ENCODE measurements at regions of chr1 and their contacts with region 1.

Region 1: DNA sequence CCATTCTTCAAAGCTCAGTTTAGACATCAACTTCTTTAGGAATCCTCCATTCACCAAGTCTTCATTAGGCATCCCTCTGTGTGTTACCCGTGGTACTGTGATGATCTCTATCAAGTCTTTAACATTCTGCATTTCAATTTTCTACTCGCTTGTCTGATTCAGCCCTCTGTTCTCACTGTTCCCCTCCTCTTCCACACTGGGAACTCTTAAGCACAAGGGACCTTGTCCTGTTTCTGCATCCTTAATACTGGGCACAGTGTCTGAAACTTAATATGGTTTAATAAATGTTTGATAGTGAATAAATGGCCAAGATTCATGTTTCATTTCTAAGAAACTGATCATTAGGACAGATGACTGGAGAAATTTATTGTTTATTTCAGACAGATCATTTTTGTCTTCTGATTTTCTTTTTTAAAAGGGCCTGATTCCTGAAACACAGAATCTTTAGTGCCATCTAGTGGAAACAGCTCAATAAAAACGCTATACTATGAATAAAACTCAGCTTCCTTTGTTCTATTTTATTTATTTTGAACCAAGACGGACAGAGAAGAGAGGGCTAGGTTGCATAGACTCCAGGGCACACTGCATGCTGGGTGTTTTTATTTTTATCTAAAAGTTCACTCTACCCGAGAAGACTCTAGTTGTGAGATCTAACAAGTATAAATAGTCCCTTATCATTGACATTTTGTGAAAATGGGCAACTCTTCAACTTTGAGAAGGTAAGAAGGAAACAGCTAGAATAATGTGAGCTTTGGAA is 7.0 kb upstream of the TRIM45 start:
- DNase-seq: no peak
- H3K4me3 ChIP-seq: no peak overlapping the region; the same call in 1 of the 2 replicates
- H3K27ac ChIP-seq: no peak overlapping the region
- H3K27me3 ChIP-seq: peaks cover 10% of the 10 kb centered on the region
- CTCF ChIP-seq: peak; percentile 57

Region 2: DNA sequence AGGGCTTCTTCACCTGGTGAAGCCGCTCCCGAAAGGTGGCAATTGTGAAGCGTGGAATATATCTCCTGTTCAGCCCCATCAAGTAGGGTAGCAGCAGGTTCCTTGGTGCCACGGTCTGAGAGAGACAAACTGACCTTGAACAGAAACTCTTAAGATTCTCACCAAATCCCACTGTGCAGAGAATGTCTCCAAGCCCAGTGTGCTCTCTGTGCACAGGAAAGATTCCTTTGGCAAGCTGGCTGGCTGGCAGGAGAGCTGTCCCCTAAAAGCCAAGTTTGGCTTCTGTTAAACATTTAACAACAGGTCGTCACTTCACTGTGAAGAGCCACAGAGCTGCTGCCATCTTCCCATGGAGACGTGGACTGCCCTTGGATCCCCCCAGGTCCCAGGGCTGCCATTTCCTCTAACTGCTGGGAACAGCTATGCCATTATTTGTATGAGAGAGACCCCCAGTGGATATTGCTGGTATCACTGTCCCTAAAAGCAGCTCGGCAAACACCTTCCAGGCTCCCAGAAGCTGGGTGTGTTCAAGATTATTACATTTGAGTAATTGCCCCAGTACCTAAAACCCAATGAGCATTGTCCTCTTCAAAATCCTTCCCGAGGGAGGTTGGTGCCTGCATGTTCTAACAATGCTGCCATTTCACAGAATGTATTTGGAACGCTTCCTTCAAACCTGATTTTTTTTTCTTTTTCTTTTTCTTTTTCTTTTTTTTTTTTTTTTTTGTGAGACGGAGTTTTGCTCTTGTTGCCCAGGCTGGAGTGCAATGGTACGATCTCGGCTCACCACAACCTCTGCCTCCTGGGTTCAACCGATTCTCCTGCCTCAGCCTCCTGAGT is 629.5 kb before region 1 on chr1:
- CTCF ChIA-PET with region 1: no interaction called
- POLR2A ChIA-PET with region 1: no interaction called
- DNase-seq: no peak
- H3K4me3 ChIP-seq: no peak overlapping the region
- H3K27ac ChIP-seq: no peak overlapping the region
- H3K27me3 ChIP-seq: no peaks in the 10 kb centered on the region
- CTCF ChIP-seq: peak; percentile 91

Region 3: DNA sequence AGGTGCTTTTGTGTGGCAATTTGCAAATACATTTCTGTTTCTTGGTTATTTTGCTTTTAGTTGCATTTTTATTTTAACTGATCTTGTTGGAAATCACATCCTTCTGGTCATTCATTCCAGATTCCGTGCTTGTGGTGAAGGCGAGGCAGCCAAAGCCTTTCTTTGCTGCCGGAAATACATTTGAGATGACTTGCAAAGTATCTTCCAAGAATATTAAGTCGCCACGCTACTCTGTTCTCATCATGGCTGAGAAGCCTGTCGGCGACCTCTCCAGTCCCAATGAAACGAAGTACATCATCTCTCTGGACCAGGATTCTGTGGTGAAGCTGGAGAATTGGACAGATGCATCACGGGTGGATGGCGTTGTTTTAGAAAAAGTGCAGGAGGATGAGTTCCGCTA is 161.7 kb before region 1 on chr1:
- CTCF ChIA-PET with region 1: no interaction called
- POLR2A ChIA-PET with region 1: no interaction called
- DNase-seq: no peak
- H3K4me3 ChIP-seq: no peak overlapping the region
- H3K27ac ChIP-seq: no peak overlapping the region
- H3K27me3 ChIP-seq: no peaks in the 10 kb centered on the region
- CTCF ChIP-seq: no peak

Region 4: GRCh38 chr1:117059678-117060440 is 68.6 kb before region 1 on chr1 and contains the start of gene TTF2:
- CTCF ChIA-PET with region 1: interaction called, 285 read pairs
- POLR2A ChIA-PET with region 1: interaction called, 5 read pairs
- DNase-seq: peak; percentile 92
- H3K4me3 ChIP-seq: peak within 1 kb of the TSS; percentile 89
- H3K27ac ChIP-seq: peak within 1 kb of the TSS; percentile 42
- H3K27me3 ChIP-seq: no peaks in the 10 kb centered on the region
- CTCF ChIP-seq: peak; percentile 30
- polyA plus RNA-seq, gene TTF2: 10.0 and 12.4 TPM in 2 replicates

Region 5: DNA sequence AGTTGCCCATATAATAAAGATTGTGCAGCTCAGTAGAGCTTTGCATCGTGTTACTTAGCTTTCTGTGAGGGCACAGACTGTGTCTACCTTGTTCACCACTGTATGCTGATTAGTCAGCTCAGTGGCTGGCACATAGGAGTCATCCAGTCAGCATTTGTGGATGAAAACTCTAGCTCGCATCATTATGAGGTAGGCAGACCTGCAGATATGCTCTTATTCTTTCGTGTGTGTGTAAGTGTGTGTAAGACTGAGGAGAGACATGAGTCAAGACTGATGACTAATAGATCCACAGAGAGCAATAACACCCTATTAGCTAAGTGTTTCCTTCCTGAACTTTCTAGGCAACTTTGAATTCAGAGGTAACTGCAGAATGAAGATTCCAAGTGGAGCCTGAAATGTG is 51.2 kb before region 1 on chr1:
- CTCF ChIA-PET with region 1: interaction called, 285 read pairs
- POLR2A ChIA-PET with region 1: no interaction called
- DNase-seq: no peak
- H3K4me3 ChIP-seq: no peak overlapping the region
- H3K27ac ChIP-seq: peak overlapping the region; percentile 74
- H3K27me3 ChIP-seq: no peaks in the 10 kb centered on the region
- CTCF ChIP-seq: no peak

Region 6: DNA sequence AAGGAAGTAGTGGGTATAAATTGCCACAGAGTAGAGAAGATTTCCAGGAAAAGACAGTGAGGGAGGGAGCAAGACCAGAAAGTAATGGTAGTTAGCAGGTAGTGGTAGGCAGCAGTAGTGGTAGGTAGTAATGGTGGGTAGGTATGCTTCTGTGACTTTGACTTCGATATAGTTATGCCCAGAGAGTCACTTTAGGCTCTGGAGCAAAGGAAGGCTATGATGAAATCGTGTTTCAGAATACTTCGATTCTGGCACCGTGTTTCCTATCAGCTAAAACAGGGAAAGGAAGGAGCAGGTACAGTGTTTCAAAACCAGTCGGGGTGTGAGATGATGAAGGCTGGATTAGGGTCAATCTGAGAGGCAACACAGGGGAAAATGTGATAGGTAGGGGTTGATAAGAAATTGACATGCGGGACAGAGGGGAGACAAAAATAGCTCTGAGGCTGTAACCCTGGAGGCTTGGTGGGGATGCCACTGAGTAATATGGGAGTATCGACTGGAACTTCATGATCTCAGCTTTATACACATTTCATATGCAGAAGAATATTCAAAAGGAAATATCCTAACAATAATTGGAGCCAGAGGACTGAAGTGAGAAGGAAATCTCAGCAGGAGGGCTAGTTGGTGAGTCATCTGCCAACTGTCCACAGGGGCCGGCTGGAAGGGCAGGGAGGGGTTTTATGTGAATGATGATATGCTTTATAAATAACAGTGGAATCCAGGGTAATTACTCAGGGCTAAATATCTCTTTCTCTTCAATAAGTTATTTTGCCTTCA is 18.3 kb after region 1 on chr1:
- CTCF ChIA-PET with region 1: interaction called, 39 read pairs
- POLR2A ChIA-PET with region 1: interaction called, 3 read pairs
- DNase-seq: peak; percentile 81
- H3K4me3 ChIP-seq: no peak overlapping the region
- H3K27ac ChIP-seq: peak overlapping the region; percentile 76
- H3K27me3 ChIP-seq: no peaks in the 10 kb centered on the region
- CTCF ChIP-seq: no peak

Region 7: GRCh38 chr1:117237696-117238381 is 109.3 kb after region 1 on chr1:
- CTCF ChIA-PET with region 1: no interaction called
- POLR2A ChIA-PET with region 1: no interaction called
- DNase-seq: no peak
- H3K4me3 ChIP-seq: no peak overlapping the region
- H3K27ac ChIP-seq: no peak overlapping the region
- H3K27me3 ChIP-seq: peaks cover 4% of the 10 kb centered on the region
- CTCF ChIP-seq: no peak

Region 8: GRCh38 chr1:117284399-117285215 is 156.1 kb after region 1 on chr1:
- CTCF ChIA-PET with region 1: interaction called, 69 read pairs
- POLR2A ChIA-PET with region 1: no interaction called
- DNase-seq: peak; percentile 50
- H3K4me3 ChIP-seq: no peak overlapping the region
- H3K27ac ChIP-seq: no peak overlapping the region
- H3K27me3 ChIP-seq: no peaks in the 10 kb centered on the region
- CTCF ChIP-seq: peak; percentile 74